Left cardiac atrium (tissue), 4 donors: ENCODE measurements at regions of chr15 and their contacts with region 1.

Region 1: GRCh38 chr15:41904541-41905005 is 10.7 kb upstream of the SPTBN5 start:
- DNase-seq: peak; percentile 66
- ATAC-seq: peak; percentile 67 to 71

Region 2: DNA sequence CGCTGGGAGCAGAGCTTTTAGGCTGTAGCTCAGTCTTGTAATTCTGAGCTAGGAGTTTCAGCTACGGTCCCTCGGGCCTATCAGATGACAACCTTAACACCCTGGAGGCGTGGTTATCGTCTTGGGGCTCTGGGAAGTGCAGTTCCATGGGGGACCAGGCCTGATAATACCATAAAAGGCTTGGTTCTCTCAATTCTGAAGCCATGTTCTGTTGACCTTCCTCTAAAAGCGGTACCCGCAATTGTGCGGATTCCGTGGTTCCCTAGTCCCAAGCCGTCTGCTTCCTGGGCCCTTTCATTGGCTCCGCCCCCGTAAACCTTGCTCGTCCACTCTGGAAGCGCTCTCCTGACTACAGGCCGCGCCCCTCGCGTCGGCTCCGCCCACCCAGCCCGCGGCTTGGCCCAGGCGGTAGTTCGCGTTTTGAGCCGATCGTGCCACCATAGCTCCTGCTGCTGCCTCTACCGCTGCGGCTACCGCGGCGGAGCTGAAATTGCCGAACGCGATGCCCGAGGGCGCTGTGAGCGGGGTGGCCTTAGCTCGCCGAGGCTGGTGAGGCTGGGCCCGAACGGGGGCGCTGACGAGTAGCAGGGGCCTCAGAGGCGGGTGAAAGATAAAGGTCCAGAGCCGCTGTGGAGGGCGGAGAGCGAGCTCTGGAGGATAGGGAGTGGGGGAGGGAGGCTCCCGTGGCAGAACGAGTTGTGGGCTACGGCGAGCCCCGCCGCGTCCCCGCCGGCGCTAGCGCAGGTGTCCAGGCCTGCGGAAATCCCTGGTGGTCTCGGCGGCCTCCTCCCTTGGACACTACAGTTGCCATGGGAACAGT is 130.3 kb before region 1 on chr15 and contains the start of gene MAPKBP1:
- intact Hi-C with region 1: loop called in 1 of 2 experiments (anchors 10 kb)
- DNase-seq: peak; percentile 98
- ATAC-seq: peak; percentile 97
- total RNA-seq, gene MAPKBP1: 13.9 to 19.0 TPM